MCF 10A (cell line): ENCODE measurements at regions of chr3 and their contacts with region 1.

Region 1: GRCh38 chr3:186617038-186617946 is 4.4 kb downstream of the AHSG start:
- DNase-seq: peak; percentile 99
- H3K4me3 Mint-ChIP-seq: peak overlapping the region; percentile 72
- H3K27ac Mint-ChIP-seq: peak overlapping the region; percentile 71
- H3K4me1 Mint-ChIP-seq: peaks cover 25% of the 10 kb centered on the region
- H3K27me3 Mint-ChIP-seq: no peaks in the 10 kb centered on the region
- CTCF ChIP-seq: peak; percentile 85

Region 2: GRCh38 chr3:186259612-186260383 is 357.5 kb before region 1 on chr3:
- CTCF ChIA-PET with region 1: interaction called, 5 read pairs
- POLR2A ChIA-PET with region 1: no interaction called
- intact Hi-C with region 1: loop called (anchors 2 kb)
- DNase-seq: peak; percentile 75
- H3K4me3 Mint-ChIP-seq: no peak overlapping the region
- H3K27ac Mint-ChIP-seq: no peak overlapping the region
- H3K4me1 Mint-ChIP-seq: peaks cover 14% of the 10 kb centered on the region
- H3K27me3 Mint-ChIP-seq: peaks cover 11% of the 10 kb centered on the region
- CTCF ChIP-seq: peak; percentile 78

Region 3: DNA sequence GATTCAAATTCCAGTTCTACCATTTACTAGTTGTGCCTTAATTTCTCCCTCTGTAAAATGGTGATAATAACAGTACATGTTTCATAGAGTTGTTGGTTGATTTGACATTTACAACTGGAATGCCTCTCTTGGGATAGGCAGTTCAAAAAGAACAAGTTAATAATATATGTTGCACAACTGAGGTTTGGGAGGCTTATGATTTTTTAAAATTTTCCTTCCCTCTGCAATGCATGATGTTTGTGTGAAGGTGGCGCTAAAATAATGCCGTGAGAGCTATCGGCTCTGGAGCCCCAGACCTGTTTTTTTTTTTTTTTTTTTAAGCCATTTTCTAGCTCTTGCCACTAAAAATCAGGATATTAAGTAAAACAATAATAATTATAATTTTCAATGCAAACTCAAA is 28.2 kb before region 1 on chr3:
- CTCF ChIA-PET with region 1: interaction called, 100 read pairs
- POLR2A ChIA-PET with region 1: interaction called, 10 read pairs
- intact Hi-C with region 1: loop called (anchors 1 kb)
- DNase-seq: peak; percentile 73
- H3K4me3 Mint-ChIP-seq: peak overlapping the region; percentile 47
- H3K27ac Mint-ChIP-seq: peak overlapping the region; percentile 86
- H3K4me1 Mint-ChIP-seq: peaks cover 25% of the 10 kb centered on the region
- H3K27me3 Mint-ChIP-seq: no peaks in the 10 kb centered on the region
- CTCF ChIP-seq: peak; percentile 33

Region 4: DNA sequence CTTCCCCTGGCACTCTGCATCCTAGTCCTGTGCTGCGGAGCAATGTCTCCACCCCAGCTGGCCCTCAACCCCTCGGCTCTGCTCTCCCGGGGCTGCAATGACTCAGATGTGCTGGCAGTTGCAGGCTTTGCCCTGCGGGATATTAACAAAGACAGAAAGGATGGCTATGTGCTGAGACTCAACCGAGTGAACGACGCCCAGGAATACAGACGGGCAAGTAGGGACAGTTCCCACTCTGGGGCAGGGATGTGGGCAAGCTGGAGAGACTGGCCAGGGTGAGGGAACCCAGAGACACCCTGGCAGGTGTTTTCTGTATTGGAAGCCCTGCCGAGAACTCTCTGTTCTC is 23.2 kb after region 1 on chr3:
- CTCF ChIA-PET with region 1: interaction called, 18 read pairs
- POLR2A ChIA-PET with region 1: interaction called, 16 read pairs
- intact Hi-C with region 1: no loop called
- DNase-seq: peak; percentile 96
- H3K4me3 Mint-ChIP-seq: peak overlapping the region; percentile 28
- H3K27ac Mint-ChIP-seq: peak overlapping the region; percentile 53
- H3K4me1 Mint-ChIP-seq: peaks cover 52% of the 10 kb centered on the region
- H3K27me3 Mint-ChIP-seq: no peaks in the 10 kb centered on the region
- CTCF ChIP-seq: no peak

Region 5: DNA sequence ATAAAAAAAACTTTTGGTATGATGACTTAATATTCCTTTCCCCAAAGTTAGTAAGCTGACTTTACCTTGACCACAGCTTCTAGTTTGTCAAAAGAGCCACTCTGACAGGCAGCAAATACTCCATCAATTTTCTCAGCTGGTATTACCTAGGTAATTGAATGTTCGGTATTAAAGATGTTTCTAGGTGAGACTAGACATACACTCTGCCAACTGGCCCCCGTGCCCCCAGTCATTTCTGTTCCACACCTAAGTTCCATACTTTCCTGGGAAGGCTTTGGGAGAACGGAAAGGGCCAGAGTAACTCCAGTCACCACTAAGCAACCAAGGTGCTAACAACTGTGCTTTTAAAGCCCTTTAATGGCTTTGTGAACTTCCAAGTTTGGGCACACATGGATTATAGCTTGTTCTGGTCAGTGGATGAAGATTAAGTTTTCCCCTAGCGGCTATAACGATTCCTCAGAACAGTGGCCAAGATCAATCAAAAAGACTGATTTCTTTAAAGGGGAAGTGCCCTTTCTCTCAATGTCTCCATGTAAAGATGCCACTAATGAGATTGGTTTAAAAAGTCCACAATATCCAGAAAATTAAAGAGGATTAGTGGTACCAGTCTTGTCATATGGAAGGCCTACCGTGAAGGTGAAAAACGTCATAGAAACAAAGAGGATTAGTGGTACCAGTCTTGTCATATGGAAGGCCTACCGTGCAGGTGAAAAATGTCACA is 173.1 kb after region 1 on chr3:
- CTCF ChIA-PET with region 1: interaction called, 37 read pairs
- POLR2A ChIA-PET with region 1: interaction called, 182 read pairs
- intact Hi-C with region 1: no loop called
- DNase-seq: peak; percentile 73
- H3K4me3 Mint-ChIP-seq: no peak overlapping the region
- H3K27ac Mint-ChIP-seq: peak overlapping the region; percentile 70
- H3K4me1 Mint-ChIP-seq: peaks cover 42% of the 10 kb centered on the region
- H3K27me3 Mint-ChIP-seq: no peaks in the 10 kb centered on the region
- CTCF ChIP-seq: no peak

Region 6: GRCh38 chr3:186821429-186822367 is 204.4 kb after region 1 on chr3:
- CTCF ChIA-PET with region 1: interaction called, 96 read pairs
- POLR2A ChIA-PET with region 1: interaction called, 10 read pairs
- intact Hi-C with region 1: loop called (anchors 1 kb)
- DNase-seq: peak; percentile 78
- H3K4me3 Mint-ChIP-seq: no peak overlapping the region
- H3K27ac Mint-ChIP-seq: no peak overlapping the region
- H3K4me1 Mint-ChIP-seq: peaks cover 19% of the 10 kb centered on the region
- H3K27me3 Mint-ChIP-seq: no peaks in the 10 kb centered on the region
- CTCF ChIP-seq: peak; percentile 66